A673 (cell line): ENCODE measurements at regions of chrX and their contacts with region 1.

Region 1: GRCh38 chrX:45614853-45615252 is 414.2 kb upstream of the DIPK2B start:
- DNase-seq: no peak
- H3K4me3 ChIP-seq: no peak overlapping the region
- H3K27ac ChIP-seq: no peak overlapping the region
- H3K4me1 ChIP-seq: peaks cover 4% of the 10 kb centered on the region
- H3K27me3 ChIP-seq: no peaks in the 10 kb centered on the region
- CTCF ChIP-seq: no peak

Region 2: DNA sequence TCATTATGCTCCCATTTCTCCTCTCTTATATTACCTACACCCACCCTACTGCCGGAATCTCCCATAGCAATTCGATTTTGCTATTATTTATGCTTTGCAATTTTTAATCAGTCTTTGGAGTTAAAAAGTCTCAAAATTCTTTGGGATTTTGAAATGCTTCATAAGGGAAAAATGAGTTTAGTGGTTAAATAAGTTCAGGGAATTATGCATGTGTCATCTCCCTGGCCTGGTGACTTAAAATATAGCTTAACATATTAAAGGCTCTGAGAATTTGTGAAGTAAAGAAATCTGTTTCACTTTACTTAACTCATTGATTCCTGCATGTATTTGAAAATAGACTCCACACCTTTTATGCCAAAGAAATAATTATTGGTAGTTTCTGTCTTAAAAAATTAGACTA is 229.1 kb before region 1 on chrX:
- CTCF ChIA-PET with region 1: no interaction called
- POLR2A ChIA-PET with region 1: no interaction called
- intact Hi-C with region 1: no loop called
- DNase-seq: no peak
- H3K4me3 ChIP-seq: no peak overlapping the region
- H3K27ac ChIP-seq: no peak overlapping the region
- H3K4me1 ChIP-seq: no peaks in the 10 kb centered on the region
- H3K27me3 ChIP-seq: no peaks in the 10 kb centered on the region
- CTCF ChIP-seq: no peak

Region 3: GRCh38 chrX:45557390-45557789 is 57.5 kb before region 1 on chrX:
- CTCF ChIA-PET with region 1: no interaction called
- POLR2A ChIA-PET with region 1: no interaction called
- intact Hi-C with region 1: no loop called
- DNase-seq: no peak
- H3K4me3 ChIP-seq: no peak overlapping the region
- H3K27ac ChIP-seq: no peak overlapping the region
- H3K4me1 ChIP-seq: no peaks in the 10 kb centered on the region
- H3K27me3 ChIP-seq: no peaks in the 10 kb centered on the region
- CTCF ChIP-seq: peak; percentile 18; the same call in 1 of the 2 replicates

Region 4: GRCh38 chrX:45862801-45863200 is 247.9 kb after region 1 on chrX:
- CTCF ChIA-PET with region 1: no interaction called
- POLR2A ChIA-PET with region 1: interaction called, 15 read pairs
- intact Hi-C with region 1: no loop called
- DNase-seq: no peak
- H3K4me3 ChIP-seq: no peak overlapping the region
- H3K27ac ChIP-seq: no peak overlapping the region
- H3K4me1 ChIP-seq: no peaks in the 10 kb centered on the region
- H3K27me3 ChIP-seq: no peaks in the 10 kb centered on the region
- CTCF ChIP-seq: no peak

Region 5: DNA sequence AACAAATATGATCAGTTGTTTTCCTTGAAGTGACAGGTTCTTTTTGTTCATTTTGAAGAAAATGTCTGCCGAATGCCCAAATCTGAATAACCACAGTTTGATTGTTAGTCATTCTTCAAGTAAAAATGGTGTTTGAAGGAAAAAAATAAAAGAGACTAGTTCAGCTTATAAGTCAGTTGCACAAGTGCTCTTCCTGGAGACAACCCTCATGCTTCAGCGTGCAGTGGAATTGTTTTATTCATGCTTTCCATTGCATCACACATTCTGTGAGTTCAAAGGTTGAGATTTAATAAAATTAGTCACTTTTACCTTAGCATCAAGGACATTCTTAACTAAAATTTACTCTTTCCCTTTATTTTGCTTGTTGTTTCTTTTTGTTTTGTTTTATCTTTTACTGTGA is 525.4 kb after region 1 on chrX:
- CTCF ChIA-PET with region 1: no interaction called
- POLR2A ChIA-PET with region 1: no interaction called
- intact Hi-C with region 1: no loop called
- DNase-seq: no peak
- H3K4me3 ChIP-seq: no peak overlapping the region
- H3K27ac ChIP-seq: no peak overlapping the region
- H3K4me1 ChIP-seq: no peaks in the 10 kb centered on the region
- H3K27me3 ChIP-seq: no peaks in the 10 kb centered on the region
- CTCF ChIP-seq: no peak